ENCODE measurements at regions of chr6 and their contacts with region 1.

Region 1: DNA sequence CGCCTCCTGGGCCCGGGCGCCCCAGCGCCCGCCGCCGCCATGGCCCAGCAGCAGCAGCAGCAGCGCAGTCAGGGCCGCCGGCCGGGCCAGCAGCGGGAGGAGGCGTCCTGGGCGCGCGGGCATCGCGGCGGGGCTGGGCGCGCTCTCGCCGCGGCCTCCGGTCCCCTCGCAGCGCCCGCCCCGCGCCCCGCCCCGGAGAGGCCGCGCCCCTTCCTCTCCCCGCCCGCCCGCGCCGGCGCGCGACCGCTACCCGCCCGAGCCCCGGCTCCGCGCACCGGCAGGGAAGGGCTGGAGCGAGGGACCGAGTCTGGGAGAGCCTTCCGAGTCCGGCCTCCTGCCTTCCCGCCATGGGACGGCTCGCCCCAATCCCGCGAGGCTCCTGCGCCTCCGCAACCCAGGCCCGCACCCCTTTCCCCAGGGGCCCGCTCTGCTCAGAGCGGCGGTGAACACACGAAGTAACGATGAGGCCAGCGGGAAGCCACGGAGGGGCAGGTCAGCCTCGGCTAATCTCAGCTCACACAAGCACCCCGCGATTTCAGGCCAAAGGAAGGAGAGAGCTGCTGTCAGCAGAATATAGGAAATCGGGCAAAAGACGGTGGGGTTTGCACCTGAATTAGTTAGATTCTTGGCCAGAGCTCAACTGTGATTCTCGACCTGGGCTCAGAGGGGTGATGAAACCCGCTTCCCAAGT is at the start of gene TXNDC5:
- DNase-seq: peak; percentile 92
- ATAC-seq: peak; percentile 86
- total RNA-seq, gene TXNDC5: 42.0 TPM

Region 2: GRCh38 chr6:7787137-7787608 is 123.6 kb before region 1 on chr6:
- intact Hi-C with region 1: no loop called
- DNase-seq: no peak
- ATAC-seq: peak; percentile 67

Region 3: DNA sequence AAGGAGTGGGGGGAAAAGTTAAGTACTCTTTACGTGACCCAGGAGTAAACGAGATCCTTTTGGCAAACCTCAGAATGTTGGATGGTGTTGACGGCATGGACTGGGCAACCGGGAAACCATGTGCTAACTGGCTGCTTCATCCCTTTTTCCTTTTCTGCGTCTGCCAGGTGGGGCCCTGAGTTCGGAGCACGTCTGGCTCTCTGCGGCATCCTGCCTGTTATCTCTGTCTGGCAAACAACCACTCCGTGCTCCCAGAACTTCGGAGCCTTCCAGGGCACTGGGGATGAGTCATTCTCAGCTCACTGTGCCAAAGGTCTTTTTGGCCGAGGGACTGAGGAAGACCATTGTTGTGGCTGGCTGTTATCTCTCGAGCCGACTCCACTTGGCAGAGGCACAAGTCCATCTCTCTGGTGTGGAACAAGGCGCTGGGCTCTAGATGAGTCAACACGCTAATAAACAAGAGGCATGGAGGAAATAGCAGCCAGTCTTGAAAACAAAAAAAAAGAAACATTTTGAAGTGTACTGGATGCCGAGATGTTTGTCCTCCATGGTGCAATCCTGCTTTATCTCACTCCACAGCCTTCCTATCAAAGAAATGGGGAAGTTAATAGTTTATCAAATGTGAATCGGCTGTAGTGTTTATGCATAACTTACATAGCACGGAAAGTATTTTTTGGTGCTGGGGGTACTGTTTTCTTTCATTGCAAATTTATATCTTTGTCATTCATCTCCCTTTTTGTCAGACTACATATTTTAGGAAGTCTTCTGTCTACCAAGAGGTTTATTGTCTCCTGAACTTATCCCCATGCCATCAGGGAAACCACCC is 64.4 kb after region 1 on chr6:
- intact Hi-C with region 1: loop called (anchors 2 kb)
- DNase-seq: peak; percentile 85
- ATAC-seq: peak; percentile 94

Region 4: GRCh38 chr6:8000188-8000596 is 89.4 kb after region 1 on chr6:
- intact Hi-C with region 1: loop called (anchors 5 kb)
- DNase-seq: no peak
- ATAC-seq: no peak

Measured in Right ventricle myocardium inferior (tissue), 1 donor.